ENCODE measurements at regions of chr13 and their contacts with region 1.

Region 1: DNA sequence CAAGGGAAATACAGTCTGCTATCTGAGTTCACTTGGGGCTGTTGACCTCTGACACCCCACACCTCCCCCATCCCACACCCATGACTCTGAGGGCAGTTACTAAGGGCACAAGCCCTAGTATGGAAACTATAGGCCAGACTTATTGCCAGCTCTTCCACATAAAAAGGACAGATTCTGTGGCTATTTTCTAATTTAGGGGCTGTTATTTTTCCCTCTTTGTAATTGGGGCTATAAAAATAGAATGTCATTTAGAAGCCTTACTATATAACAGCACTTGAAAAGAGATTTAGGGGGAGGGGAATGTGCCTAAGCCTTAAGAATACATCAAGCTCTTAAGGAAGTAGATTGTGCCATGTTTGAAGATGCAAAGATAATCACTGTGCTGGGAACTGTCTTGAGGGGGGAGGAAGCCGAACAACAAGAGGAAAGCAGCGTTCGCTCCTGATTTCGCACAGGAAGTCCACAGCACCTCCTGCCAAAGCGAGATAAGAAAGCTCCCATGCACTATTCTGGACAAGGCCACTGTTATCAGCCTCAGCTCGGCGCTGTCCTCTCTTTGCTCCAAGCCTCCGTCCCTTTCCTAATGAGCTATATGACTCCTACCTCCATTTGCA is 86.6 kb downstream of the FLT1 start:
- DNase-seq: peak; percentile 100
- H3K4me3 ChIP-seq: peak overlapping the region in 1 of 3 experiments; percentile 10
- H3K27ac ChIP-seq: peak overlapping the region; percentile 97
- H3K4me1 ChIP-seq: peaks cover 53% of the 10 kb centered on the region
- H3K27me3 ChIP-seq: no peaks in the 10 kb centered on the region
- CTCF ChIP-seq: no peak
- POLR2A ChIP-seq: peak; percentile 86

Region 2: GRCh38 chr13:28324181-28324789 is 84.1 kb before region 1 on chr13:
- CTCF ChIA-PET with region 1: interaction called, 10 read pairs
- POLR2A ChIA-PET with region 1: no interaction called
- dilution Hi-C with region 1: no loop called
- intact Hi-C with region 1: loop called (anchors 1 kb)
- DNase-seq: peak; percentile 80
- H3K4me3 ChIP-seq: no peak overlapping the region
- H3K27ac ChIP-seq: peak overlapping the region; percentile 86
- H3K4me1 ChIP-seq: peaks cover 63% of the 10 kb centered on the region
- H3K27me3 ChIP-seq: no peaks in the 10 kb centered on the region
- CTCF ChIP-seq: peak; percentile 81 to 87
- POLR2A ChIP-seq: no peak

Region 3: GRCh38 chr13:28355822-28356371 is 52.4 kb before region 1 on chr13:
- CTCF ChIA-PET with region 1: interaction called, 9 read pairs
- POLR2A ChIA-PET with region 1: no interaction called
- dilution Hi-C with region 1: no loop called
- intact Hi-C with region 1: loop called (anchors 1 kb)
- DNase-seq: peak; percentile 93
- H3K4me3 ChIP-seq: no peak overlapping the region
- H3K27ac ChIP-seq: peak overlapping the region; percentile 97
- H3K4me1 ChIP-seq: peaks cover 74% of the 10 kb centered on the region
- H3K27me3 ChIP-seq: no peaks in the 10 kb centered on the region
- CTCF ChIP-seq: no peak
- POLR2A ChIP-seq: peak; percentile 66

Region 4: DNA sequence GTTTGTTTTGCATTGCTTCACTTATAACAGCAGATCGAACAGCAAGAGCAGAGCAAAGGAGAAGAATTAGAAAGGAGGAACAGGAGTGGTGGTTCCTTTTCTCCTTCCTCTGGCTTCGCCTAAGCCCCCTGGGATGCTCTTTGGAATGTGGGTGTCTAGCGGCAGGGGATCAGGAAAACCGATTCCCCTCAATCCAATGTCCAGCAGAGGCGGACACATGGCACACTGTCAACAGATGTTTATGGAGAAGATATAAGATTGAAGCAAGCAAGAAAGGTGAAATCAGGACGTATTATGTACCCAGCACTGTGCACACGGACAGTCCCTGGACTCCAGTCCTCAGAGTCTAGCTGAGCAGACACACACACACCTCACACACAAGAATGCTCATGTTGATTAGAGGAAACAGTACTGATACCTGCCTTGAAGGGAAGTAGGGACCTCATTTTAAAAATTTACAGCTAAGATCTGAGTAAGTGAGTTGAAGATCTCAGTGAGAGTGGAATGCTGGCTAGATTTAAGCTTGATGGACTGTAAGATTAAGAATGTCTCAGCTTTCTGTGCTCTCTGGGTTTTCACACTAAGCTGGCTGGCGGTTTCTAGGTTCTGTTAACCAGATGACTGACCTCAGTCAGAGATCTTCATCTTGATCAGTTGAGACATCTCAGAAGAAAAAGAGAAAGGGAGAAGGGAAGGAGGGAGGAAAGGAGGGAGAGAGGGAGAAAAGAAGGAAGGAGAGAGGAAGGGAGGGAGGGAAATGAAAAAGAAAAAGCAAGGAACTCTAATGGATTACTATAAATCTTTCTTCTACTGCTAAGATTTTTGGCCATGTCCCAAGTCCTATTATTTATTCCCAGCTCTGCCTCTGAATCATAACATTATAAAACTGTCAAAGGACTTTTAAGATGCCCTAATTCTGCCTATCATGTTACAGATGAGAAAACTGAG is 41.8 kb after region 1 on chr13:
- CTCF ChIA-PET with region 1: interaction called, 5 read pairs
- POLR2A ChIA-PET with region 1: interaction called, 3 read pairs
- dilution Hi-C with region 1: no loop called
- intact Hi-C with region 1: loop called (anchors 1 kb)
- DNase-seq: peak; percentile 77
- H3K4me3 ChIP-seq: no peak overlapping the region
- H3K27ac ChIP-seq: peak overlapping the region; percentile 58
- H3K4me1 ChIP-seq: peaks cover 28% of the 10 kb centered on the region
- H3K27me3 ChIP-seq: no peaks in the 10 kb centered on the region
- CTCF ChIP-seq: no peak
- POLR2A ChIP-seq: no peak

Region 5: DNA sequence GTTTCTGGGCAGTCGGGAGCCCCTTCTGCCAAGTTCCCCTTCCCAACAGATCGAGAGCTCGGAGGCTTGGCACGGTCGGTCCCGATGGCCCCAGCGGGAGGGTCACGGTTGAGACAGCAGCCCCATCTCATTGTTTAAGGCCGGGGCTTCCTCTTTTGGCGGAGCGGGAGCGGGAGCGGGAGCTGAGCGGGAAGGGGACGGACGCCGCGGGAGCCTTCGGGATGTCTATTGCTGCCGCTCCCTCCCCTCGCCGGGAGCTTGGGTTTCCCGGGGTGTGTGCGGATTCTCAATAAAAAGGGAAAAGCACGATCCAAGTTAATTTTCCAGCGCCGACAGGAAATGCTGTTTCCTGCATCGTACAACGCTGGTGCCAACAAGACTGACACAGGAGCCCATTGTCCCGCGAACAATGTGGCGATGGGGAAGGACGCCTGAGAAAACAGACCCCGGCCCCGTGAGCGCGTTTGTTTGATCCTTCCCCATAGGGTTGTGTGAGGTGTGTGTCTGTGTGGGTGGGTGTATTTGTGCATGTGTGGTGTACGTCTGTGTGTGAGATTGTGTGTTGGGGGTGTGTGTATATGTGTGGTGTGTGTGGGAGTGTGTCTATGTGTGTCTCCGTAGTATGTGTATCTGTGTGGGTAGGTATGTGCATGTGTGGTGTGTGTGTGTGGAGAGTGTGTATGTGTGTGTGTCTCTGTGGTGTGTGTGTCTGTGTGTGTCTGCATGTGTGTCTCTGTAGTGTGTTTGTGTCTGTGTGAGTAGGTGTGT is 122.9 kb after region 1 on chr13:
- CTCF ChIA-PET with region 1: interaction called, 3 read pairs
- POLR2A ChIA-PET with region 1: no interaction called
- dilution Hi-C with region 1: no loop called
- intact Hi-C with region 1: loop called (anchors 2 kb)
- DNase-seq: peak; percentile 85
- H3K4me3 ChIP-seq: peak overlapping the region in 2 of 3 experiments; percentile 45
- H3K27ac ChIP-seq: peak overlapping the region; percentile 36
- H3K4me1 ChIP-seq: peaks cover 14% of the 10 kb centered on the region
- H3K27me3 ChIP-seq: no peaks in the 10 kb centered on the region
- CTCF ChIP-seq: no peak
- POLR2A ChIP-seq: no peak

Measured in endothelial cell of umbilical vein (primary cell).